Activated CD8-positive, alpha-beta T cell treated with anti-CD3 and anti-CD28 coated beads, Interleukin-2, amount 10 ng/mL, durations not matched to agents 7 days and 5 days (primary cell): ENCODE measurements at regions of chr12 and their contacts with region 1.

Region 1: GRCh38 chr12:111993292-111994150 is 19.4 kb downstream of the TMEM116 start:
- DNase-seq: peak; percentile 59
- ATAC-seq: peak; percentile 79
- H3K4me3 Mint-ChIP-seq: peak overlapping the region; percentile 79
- H3K27ac Mint-ChIP-seq: peak overlapping the region; percentile 88
- H3K4me1 Mint-ChIP-seq: peaks cover 54% of the 10 kb centered on the region
- H3K27me3 Mint-ChIP-seq: no peaks in the 10 kb centered on the region

Region 2: GRCh38 chr12:111942557-111942956 is 51.0 kb before region 1 on chr12:
- CTCF ChIA-PET with region 1: interaction called, 11 read pairs
- POLR2A ChIA-PET with region 1: interaction called, 3 read pairs
- DNase-seq: no peak
- ATAC-seq: no peak
- H3K4me3 Mint-ChIP-seq: no peak overlapping the region
- H3K27ac Mint-ChIP-seq: no peak overlapping the region
- H3K4me1 Mint-ChIP-seq: peaks cover 14% of the 10 kb centered on the region
- H3K27me3 Mint-ChIP-seq: no peaks in the 10 kb centered on the region

Region 3: DNA sequence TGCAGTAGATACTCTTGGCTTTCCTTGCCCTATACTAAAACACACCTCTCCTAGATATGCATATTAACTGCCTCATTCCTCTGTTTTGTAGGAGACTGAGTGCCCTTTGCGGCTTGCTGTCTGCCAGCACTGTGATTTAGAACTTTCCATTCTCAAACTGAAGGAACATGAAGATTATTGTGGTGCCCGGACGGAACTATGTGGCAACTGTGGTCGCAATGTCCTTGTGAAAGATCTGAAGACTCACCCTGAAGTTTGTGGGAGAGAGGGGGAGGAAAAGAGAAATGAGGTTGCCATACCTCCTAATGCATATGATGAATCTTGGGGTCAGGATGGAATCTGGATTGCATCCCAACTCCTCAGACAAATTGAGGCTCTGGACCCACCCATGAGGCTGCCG is 147.2 kb after region 1 on chr12:
- CTCF ChIA-PET with region 1: no interaction called
- POLR2A ChIA-PET with region 1: no interaction called
- DNase-seq: no peak
- ATAC-seq: no peak
- H3K4me3 Mint-ChIP-seq: no peak overlapping the region
- H3K27ac Mint-ChIP-seq: peak overlapping the region; percentile 1
- H3K4me1 Mint-ChIP-seq: no peaks in the 10 kb centered on the region
- H3K27me3 Mint-ChIP-seq: no peaks in the 10 kb centered on the region